ENCODE measurements at regions of chr10 and their contacts with region 1.

Region 1: DNA sequence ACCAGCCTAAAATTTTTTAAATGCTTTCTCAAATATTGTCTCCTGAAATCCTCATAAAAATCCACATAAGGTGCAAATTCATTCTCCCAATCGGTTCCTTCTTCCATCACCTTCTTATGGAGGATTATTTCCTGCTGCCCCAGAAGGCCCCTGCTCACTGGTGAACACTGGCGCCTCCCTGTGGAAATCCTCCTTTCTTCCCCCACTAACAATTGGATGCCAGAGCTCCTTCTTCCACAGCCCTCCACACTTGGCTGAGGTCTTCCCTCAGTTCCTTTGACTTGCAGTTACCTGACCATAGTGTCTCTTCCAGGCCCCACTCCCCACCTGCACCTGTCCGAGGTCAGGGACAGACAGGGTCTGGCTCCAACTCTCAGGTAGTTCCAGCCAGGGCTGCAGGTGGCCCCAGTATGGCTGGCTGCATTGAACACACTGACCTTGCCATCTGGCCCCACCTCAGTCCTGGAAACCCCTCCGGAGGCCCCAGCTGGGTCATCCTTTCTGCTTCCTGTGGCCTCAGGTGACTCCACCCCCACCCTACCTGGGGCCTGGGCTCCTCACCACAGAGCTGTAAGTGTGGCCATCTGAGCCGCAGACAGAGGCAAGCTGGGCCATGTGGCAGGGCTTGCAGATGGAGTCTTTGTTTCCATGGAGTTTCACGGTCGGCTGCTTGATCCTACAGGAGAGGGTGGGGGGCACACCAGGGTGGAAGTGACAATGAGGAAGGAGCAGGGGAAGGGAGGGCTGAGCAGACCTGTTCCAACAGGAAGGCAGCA is 18.4 kb downstream of the SPOCK2 start:
- DNase-seq: no peak
- ATAC-seq: no peak

Region 2: GRCh38 chr10:72107325-72108003 is 37.5 kb after region 1 on chr10:
- intact Hi-C with region 1: loop called (anchors 5 kb)
- DNase-seq: no peak
- ATAC-seq: no peak